ENCODE measurements at regions of chr7 and their contacts with region 1.

Region 1: GRCh38 chr7:44769776-44770662 is 21.4 kb downstream of the ZMIZ2 start:
- DNase-seq: peak in 1 of 2 donors; percentile 60
- H3K4me3 ChIP-seq: no peak overlapping the region
- H3K27ac ChIP-seq: peak overlapping the region in 4 of 5 donors; percentile 20 to 74 (median 72)
- H3K4me1 ChIP-seq: peaks cover 33 to 47% (median 37%) of the 10 kb centered on the region in 4 donors
- H3K27me3 ChIP-seq: no peaks in the 10 kb centered on the region
- CTCF ChIP-seq: no peak
- EP300 ChIP-seq: no peak
- POLR2A ChIP-seq: no peak

Region 2: GRCh38 chr7:44383566-44383965 is 386.5 kb before region 1 on chr7:
- intact Hi-C with region 1: no loop called
- DNase-seq: peak in 1 of 2 donors; percentile 21
- H3K4me3 ChIP-seq: no peak overlapping the region
- H3K27ac ChIP-seq: no peak overlapping the region
- H3K4me1 ChIP-seq: no peaks in the 10 kb centered on the region
- H3K27me3 ChIP-seq: no peaks in the 10 kb centered on the region
- CTCF ChIP-seq: no peak
- EP300 ChIP-seq: no peak
- POLR2A ChIP-seq: no peak

Region 3: DNA sequence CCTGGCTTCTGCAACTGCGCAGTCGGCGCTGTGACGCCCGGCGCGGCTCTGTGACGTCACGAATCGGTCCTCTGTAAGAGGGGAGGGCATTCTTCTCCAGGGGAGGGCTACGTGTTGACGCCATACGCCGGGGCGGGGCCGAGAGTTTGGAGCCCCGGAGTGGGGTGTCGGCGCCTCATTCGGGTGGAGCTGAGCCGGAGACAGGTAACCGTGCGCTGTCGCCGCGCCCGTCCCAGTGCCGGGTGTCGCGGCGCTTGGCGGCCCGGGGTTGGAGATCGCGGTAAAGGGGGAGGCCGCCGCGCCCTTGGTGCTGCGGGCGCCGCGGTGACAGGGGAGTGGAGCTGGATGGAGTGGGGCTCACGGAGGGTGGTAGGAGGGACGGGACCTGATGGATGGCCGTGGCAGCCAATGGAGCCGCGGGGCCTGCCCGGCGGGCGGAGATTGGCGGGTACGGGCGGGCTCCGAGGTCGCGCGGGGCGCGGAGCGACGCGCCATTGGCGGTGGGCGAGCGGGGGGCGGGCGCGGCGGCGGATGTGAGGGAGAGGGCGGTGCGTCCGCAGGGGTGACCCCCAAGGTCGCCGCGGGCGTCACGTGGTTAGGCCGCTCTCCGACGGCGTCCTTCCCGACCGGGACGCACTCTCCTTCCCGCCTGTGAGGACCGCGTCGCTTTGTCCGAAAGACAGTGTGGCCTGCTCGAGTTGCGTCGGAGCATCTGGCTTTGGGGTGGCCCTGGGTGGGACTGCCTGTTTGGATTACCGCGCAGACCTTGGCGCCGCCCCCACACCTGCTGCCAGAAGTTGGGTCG is 163.4 kb before region 1 on chr7 and contains the start of gene OGDH:
- intact Hi-C with region 1: loop called (anchors 10 kb)
- DNase-seq: peak; percentile 100
- H3K4me3 ChIP-seq: peak within 1 kb of the TSS; percentile 61 to 92 (median 68)
- H3K27ac ChIP-seq: peak within 1 kb of the TSS; percentile 97 to 100 (median 99)
- H3K4me1 ChIP-seq: peaks cover 13 to 42% (median 34%) of the 10 kb centered on the region in 4 donors
- H3K27me3 ChIP-seq: no peaks in the 10 kb centered on the region
- CTCF ChIP-seq: no peak
- EP300 ChIP-seq: no peak
- POLR2A ChIP-seq: peak in 2 of 4 donors; percentile 89 to 92
- total RNA-seq, gene OGDH: 21.6 to 92.0 (median 56.5) TPM

Region 4: GRCh38 chr7:44936322-44936721 is 166.3 kb after region 1 on chr7:
- intact Hi-C with region 1: no loop called
- DNase-seq: no peak
- H3K4me3 ChIP-seq: no peak overlapping the region
- H3K27ac ChIP-seq: no peak overlapping the region
- H3K4me1 ChIP-seq: no peaks in the 10 kb centered on the region
- H3K27me3 ChIP-seq: peaks cover 0 to 12% (median 0%) of the 10 kb centered on the region in 3 donors
- CTCF ChIP-seq: no peak
- EP300 ChIP-seq: no peak
- POLR2A ChIP-seq: no peak

Measured in stomach (tissue), 19 donors.